ENCODE measurements at regions of chr1 and their contacts with region 1.

Region 1: DNA sequence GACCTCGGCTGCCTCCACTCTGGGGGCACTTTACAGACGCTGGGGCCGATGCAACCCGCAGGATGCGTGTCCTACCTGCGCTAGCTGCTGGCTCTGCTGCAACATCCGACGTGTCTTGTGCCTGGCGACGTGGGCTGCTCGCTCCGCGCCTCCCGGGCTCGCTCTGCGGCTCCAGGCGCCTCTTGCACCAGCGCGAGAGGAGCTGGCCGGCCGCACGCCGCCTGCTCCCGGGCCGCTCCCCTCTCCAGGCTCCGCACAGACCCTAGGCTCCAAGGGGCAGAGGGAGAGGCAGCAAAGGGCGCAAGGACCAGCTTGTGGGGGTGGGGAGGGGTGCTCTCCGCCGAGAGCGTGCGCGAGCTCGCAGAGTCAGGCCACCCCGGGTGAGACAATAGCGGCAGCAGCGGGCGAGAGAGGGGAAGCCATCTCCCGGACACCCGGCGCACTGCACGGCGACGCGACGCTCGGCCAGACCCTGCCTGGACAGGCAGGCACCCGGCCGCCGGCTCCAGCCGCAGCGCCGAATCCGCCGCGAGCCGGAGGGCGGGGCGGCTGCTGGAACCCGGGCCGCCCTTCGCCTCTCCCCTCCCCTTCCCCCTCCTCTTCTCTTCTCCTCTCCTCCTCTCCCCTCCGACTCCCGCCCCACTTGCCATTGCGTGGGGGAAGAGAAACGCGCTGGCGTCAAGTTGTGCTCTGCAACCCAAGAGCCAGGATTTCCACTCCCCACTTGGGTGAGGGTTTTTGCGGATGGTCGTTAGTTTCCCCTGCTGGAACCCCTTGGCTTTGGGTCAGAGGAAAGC is at the start of gene PIK3C2B:
- DNase-seq: peak; percentile 64
- H3K4me3 Mint-ChIP-seq: peak within 1 kb of the TSS; percentile 95
- H3K27ac Mint-ChIP-seq: peak within 1 kb of the TSS; percentile 96
- H3K4me1 Mint-ChIP-seq: peaks cover 61% of the 10 kb centered on the region
- H3K27me3 Mint-ChIP-seq: no peaks in the 10 kb centered on the region
- total RNA-seq, gene PIK3C2B: 21.8 and 24.1 TPM in 2 replicates

Region 2: DNA sequence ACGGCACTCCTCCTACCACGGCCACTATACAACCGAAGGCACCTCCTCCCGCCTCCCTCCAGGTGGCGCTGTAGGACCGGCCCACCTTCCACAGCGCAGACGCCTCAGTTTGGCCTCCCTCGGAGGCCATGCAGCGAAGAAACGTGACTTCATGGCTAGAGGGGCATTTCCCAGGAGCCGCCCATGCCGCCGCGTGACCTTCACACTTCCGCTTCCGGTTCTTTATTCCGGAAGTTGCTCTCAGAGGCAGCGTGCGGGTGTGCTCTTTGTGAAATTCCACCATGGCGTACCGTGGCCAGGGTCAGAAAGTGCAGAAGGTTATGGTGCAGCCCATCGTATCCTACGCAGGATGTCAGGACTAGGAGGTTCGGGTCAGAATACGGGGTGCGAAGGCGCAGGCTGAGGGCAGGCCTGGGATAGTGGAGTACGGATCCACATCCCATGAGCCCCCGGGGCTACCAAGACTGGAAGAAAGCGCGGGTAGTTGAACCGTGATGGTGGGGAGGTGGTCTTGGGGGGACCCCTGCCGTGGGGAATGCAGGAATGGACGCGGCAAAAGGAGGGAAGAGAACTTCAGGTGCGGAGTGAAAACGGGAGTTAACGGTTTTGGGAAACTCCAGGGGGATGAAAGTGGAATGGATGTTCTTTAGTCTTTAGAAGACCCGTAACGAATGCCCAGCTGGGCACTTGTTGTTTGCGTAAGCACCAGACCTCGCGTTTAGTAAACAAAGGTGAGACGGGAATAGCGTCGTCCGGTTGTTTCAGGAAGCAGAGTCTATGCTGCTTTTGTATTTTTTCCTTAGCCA is 632.9 kb before region 1 on chr1 and contains the start of gene SNRPE:
- intact Hi-C with region 1: loop called (anchors 1 kb)
- DNase-seq: peak; percentile 96
- H3K4me3 Mint-ChIP-seq: peak within 1 kb of the TSS; percentile 100
- H3K27ac Mint-ChIP-seq: peak within 1 kb of the TSS; percentile 98
- H3K4me1 Mint-ChIP-seq: peaks cover 25% of the 10 kb centered on the region
- H3K27me3 Mint-ChIP-seq: no peaks in the 10 kb centered on the region
- total RNA-seq, gene SNRPE: 250 and 270 TPM in 2 replicates

Region 3: GRCh38 chr1:204411451-204412204 is 82.9 kb before region 1 on chr1 and contains the start of gene PPP1R15B:
- intact Hi-C with region 1: loop called (anchors 1 kb)
- DNase-seq: peak; percentile 98
- H3K4me3 Mint-ChIP-seq: peak within 1 kb of the TSS; percentile 99
- H3K27ac Mint-ChIP-seq: peak within 1 kb of the TSS; percentile 99
- H3K4me1 Mint-ChIP-seq: peaks cover 12% of the 10 kb centered on the region
- H3K27me3 Mint-ChIP-seq: no peaks in the 10 kb centered on the region
- total RNA-seq, gene PPP1R15B: 75.8 and 76.2 TPM in 2 replicates

Region 4: DNA sequence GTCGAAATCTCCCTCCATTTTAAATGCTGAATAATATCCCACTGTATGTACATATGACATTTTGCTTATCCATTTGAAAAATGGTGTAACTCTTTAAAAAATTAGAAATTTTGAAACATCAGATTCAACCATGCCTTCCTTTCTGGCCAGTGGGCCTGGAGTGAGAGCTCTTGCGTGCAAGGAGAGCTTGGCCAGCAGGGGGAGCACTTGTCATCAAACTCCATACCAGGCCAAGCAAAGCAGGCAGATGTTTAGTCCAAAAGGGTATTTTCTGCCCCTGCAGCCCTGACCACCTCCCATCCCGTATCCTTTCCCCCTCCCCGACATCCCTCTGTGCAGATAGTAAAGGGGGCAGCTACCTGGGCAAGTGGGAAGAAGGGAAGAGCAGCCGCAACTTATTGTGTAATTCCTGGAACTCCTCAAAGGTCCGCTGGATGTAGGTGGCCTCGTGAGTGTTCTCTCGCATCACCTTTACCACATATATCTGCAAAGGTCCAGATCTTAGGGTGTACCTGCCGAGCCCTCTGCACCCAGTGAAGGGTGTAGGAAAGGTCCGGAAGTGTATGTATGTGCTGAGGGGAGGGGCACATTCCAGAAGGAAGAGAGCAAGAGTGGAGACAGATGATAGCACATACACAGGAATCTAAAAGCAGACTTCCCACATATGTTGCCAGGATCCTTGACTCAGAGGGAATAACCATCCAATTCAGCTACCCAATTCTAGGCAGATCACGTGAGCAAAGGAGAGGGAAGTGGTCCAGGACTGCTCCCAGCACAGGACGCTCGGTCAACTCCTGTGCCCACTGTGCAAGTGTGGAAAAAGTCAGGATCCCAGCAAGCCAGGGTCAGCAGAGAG is 62.9 kb before region 1 on chr1:
- intact Hi-C with region 1: loop called (anchors 2 kb)
- DNase-seq: peak; percentile 58
- H3K4me3 Mint-ChIP-seq: no peak overlapping the region
- H3K27ac Mint-ChIP-seq: no peak overlapping the region
- H3K4me1 Mint-ChIP-seq: no peaks in the 10 kb centered on the region
- H3K27me3 Mint-ChIP-seq: no peaks in the 10 kb centered on the region

Region 5: GRCh38 chr1:204453141-204453772 is 41.2 kb before region 1 on chr1:
- intact Hi-C with region 1: loop called (anchors 1 kb)
- DNase-seq: peak; percentile 62
- H3K4me3 Mint-ChIP-seq: peak overlapping the region; percentile 75
- H3K27ac Mint-ChIP-seq: peak overlapping the region; percentile 84
- H3K4me1 Mint-ChIP-seq: peaks cover 45% of the 10 kb centered on the region
- H3K27me3 Mint-ChIP-seq: no peaks in the 10 kb centered on the region

Region 6: DNA sequence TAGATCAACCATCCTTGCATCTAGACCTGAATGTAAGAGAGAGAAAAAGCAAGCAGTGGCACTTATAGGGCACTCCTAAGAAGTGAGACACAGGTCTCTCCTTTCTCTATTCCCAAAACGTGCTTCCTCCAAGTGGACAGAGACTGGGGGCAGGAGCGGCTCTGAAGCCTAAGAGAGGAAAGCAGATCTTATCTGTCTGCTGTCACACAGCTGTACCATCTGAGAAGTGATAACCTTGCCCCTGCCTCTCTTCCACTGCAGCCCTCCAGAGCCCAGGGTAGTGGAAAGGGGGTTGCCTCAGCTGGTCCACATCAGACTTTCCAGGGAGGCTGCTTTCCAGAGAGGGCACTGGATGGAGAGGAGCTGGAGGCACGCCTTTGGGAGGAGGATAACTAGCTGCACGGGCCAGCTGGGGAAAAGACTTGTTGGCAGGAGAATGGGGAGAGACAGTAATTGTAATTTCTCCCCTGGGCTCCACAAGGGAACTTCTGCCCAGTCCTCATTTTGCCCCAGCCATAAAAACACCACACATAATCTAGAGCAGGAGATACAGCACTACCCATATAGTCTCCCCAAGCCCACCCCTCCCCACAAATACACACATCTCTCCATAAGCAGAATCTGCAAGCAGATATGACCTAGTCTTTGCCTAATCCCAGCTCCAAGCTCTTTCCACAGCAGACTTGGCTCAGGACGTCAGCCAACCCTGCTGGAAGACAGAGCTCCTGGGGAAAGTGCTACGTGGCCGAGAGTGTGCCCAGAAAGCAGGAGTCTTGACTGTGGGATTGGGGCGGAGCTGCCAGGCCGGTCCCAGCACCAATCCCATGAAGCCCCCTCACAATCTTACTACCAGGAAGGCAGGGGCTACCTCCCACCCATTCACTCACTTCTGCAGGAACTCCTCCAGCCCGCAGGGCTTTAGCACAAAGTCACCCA is 31.1 kb before region 1 on chr1:
- intact Hi-C with region 1: loop called (anchors 1 kb)
- DNase-seq: no peak
- H3K4me3 Mint-ChIP-seq: no peak overlapping the region
- H3K27ac Mint-ChIP-seq: no peak overlapping the region
- H3K4me1 Mint-ChIP-seq: peaks cover 62% of the 10 kb centered on the region
- H3K27me3 Mint-ChIP-seq: no peaks in the 10 kb centered on the region

Region 7: GRCh38 chr1:204506961-204507387 is 12.5 kb after region 1 on chr1:
- intact Hi-C with region 1: loop called (anchors 1 kb)
- DNase-seq: peak; percentile 87
- H3K4me3 Mint-ChIP-seq: peak overlapping the region; percentile 94
- H3K27ac Mint-ChIP-seq: peak overlapping the region; percentile 98
- H3K4me1 Mint-ChIP-seq: peaks cover 48% of the 10 kb centered on the region
- H3K27me3 Mint-ChIP-seq: peaks cover 6% of the 10 kb centered on the region